ENCODE measurements at regions of chr7 and their contacts with region 1.

Region 1: GRCh38 chr7:149624419-149625339 is 127.1 kb upstream of the ZNF746 start:
- DNase-seq: peak; percentile 93
- H3K4me3 ChIP-seq: peak overlapping the region; percentile 100
- H3K27ac ChIP-seq: peak overlapping the region; percentile 45
- H3K4me1 ChIP-seq: peaks cover 26% of the 10 kb centered on the region
- CTCF ChIP-seq: peak; percentile 76

Region 2: GRCh38 chr7:149261829-149262617 is 362.7 kb before region 1 on chr7 and contains the start of gene ZNF783:
- CTCF ChIA-PET with region 1: no interaction called
- POLR2A ChIA-PET with region 1: no interaction called
- intact Hi-C with region 1: loop called (anchors 10 kb)
- DNase-seq: peak; percentile 94
- H3K4me3 ChIP-seq: peak within 1 kb of the TSS; percentile 76
- H3K27ac ChIP-seq: no peak within 1 kb of the TSS
- H3K4me1 ChIP-seq: peaks cover 19% of the 10 kb centered on the region
- CTCF ChIP-seq: peak; percentile 80
- total RNA-seq, gene ZNF783: 10.5 and 13.1 TPM in 2 replicates

Region 3: DNA sequence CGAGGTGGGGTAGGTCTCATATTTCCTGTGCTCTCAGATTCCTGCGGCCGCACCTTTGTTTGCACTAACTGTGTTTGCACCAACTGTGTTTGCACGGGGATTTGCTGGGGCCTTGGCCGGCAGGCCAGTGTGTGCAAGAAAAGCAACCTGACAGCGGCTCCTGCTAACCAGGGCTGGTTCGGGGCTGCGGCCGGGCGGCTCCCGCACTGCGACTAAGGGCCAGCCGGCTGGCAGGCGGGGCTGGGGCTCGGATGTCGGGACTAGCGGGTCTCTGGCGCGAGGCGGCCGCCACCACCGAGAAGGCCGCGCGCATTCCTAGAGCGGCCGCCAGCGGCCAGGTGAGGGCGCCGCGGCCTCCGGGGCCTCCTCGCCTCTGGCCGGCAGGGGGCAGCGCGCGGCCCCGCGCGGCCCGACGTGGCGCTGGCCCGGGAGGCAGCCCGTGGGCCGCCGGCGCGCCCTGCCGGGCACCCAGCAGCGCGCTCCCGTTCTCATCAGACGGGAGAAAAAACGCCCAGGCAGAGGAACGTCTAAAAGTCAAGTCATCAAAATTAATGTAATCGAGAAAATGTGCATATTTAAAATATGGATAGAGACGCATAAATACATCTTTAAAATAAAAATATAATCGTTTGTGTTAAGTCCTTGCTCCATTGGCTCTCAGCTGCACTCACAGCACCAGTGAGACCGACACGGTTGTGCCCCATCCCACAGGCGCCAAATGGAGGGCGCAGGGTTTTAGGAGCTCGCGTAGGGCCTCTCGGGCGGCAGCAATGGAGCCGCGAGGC is 202.4 kb before region 1 on chr7:
- CTCF ChIA-PET with region 1: no interaction called
- POLR2A ChIA-PET with region 1: interaction called, 5 read pairs
- intact Hi-C with region 1: loop called (anchors 1 kb)
- DNase-seq: peak; percentile 84
- H3K4me3 ChIP-seq: peak overlapping the region; percentile 58
- H3K27ac ChIP-seq: no peak overlapping the region
- H3K4me1 ChIP-seq: peaks cover 5% of the 10 kb centered on the region
- CTCF ChIP-seq: peak; percentile 62

Region 4: GRCh38 chr7:149460493-149461277 is 164.0 kb before region 1 on chr7 and contains the start of gene ZNF777:
- CTCF ChIA-PET with region 1: interaction called, 3 read pairs
- POLR2A ChIA-PET with region 1: no interaction called
- intact Hi-C with region 1: loop called (anchors 1 kb)
- DNase-seq: peak; percentile 87
- H3K4me3 ChIP-seq: peak within 1 kb of the TSS; percentile 71
- H3K27ac ChIP-seq: no peak within 1 kb of the TSS
- H3K4me1 ChIP-seq: peaks cover 17% of the 10 kb centered on the region
- CTCF ChIP-seq: peak; percentile 70
- total RNA-seq, gene ZNF777: 5.2 and 6.2 TPM in 2 replicates

Region 5: GRCh38 chr7:149497456-149498261 is 127.0 kb before region 1 on chr7 and contains the start of gene ZNF746:
- CTCF ChIA-PET with region 1: no interaction called
- POLR2A ChIA-PET with region 1: no interaction called
- intact Hi-C with region 1: loop called (anchors 2 kb)
- DNase-seq: peak; percentile 91
- H3K4me3 ChIP-seq: peak within 1 kb of the TSS; percentile 100
- H3K27ac ChIP-seq: no peak within 1 kb of the TSS
- H3K4me1 ChIP-seq: peaks cover 16% of the 10 kb centered on the region
- CTCF ChIP-seq: 0 out of 2 replicates have a peak, but pooled peaks have one; percentile 42
- total RNA-seq, gene ZNF746: 14.8 and 17.3 TPM in 2 replicates

Region 6: DNA sequence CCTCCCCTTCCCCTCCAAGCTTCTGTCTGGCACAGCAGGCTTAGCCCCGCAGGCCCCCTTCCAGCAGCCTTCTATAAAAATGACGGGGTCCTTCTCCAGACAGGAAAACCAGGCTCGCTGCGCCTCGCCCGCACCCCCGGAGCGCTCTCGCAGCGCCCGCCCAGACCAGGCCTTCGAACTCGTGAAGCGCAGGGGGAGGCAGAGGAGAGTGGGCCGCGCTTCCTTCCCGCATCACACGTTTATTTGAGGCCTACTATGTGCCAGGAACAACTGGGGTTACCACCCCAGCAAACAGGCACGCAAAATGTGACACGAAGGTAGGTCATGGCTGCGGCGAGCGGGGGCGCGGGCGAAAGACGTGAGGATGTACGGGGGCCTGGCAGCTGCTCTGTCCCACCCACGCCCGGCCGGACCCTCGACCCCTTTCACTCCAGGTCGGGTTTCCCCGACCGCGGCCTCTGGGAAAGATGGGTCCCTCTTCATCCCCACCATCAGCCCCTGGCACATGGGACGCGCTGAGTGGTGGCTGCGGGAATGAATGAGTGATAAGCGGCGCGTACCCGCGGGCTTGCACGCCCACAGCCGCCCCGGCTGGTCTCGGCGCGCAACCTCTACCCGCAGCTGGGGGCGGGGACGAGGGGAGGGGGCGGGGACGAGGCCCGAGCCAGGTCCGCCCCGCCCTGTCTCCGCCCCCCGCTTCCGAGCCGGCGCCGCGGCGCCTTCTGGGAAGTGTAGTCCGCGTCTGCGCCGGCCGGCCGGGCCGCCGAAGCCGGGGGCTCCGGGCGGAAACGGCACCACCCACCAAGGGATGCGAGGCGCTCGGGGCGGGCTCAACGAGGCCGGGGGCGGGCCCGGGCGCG is 89.6 kb after region 1 on chr7:
- CTCF ChIA-PET with region 1: no interaction called
- POLR2A ChIA-PET with region 1: no interaction called
- intact Hi-C with region 1: loop called (anchors 5 kb)
- DNase-seq: peak; percentile 93
- H3K4me3 ChIP-seq: peak overlapping the region; percentile 96
- H3K27ac ChIP-seq: no peak overlapping the region
- H3K4me1 ChIP-seq: peaks cover 12% of the 10 kb centered on the region
- CTCF ChIP-seq: no peak

Region 7: GRCh38 chr7:151232091-151232916 is 1607.6 kb after region 1 on chr7 and contains the start of gene CHPF2:
- CTCF ChIA-PET with region 1: no interaction called
- POLR2A ChIA-PET with region 1: no interaction called
- intact Hi-C with region 1: loop called (anchors 10 kb)
- DNase-seq: peak; percentile 90
- H3K4me3 ChIP-seq: peak within 1 kb of the TSS; percentile 86
- H3K27ac ChIP-seq: peak within 1 kb of the TSS; percentile 11
- H3K4me1 ChIP-seq: peaks cover 24% of the 10 kb centered on the region
- CTCF ChIP-seq: no peak
- total RNA-seq, gene CHPF2: 19.8 and 27.0 TPM in 2 replicates

Measured in OCI-LY7 (cell line).